ENCODE measurements at regions of chr1 and their contacts with region 1.

Region 1: GRCh38 chr1:29245876-29246275 is 9.6 kb downstream of the PTPRU start:
- DNase-seq: no peak
- H3K4me3 ChIP-seq: no peak overlapping the region
- H3K4me1 ChIP-seq: peaks cover 8% of the 10 kb centered on the region; the same call in 1 of the 2 replicates
- H3K27me3 ChIP-seq: no peaks in the 10 kb centered on the region

Region 2: GRCh38 chr1:29305943-29306342 is 60.1 kb after region 1 on chr1:
- in situ Hi-C with region 1: no loop called
- DNase-seq: no peak
- H3K4me3 ChIP-seq: no peak overlapping the region
- H3K4me1 ChIP-seq: 0 out of 2 replicates have a peak, but pooled peaks cover 5% of the 10 kb centered on the region
- H3K27me3 ChIP-seq: no peaks in the 10 kb centered on the region

Region 3: DNA sequence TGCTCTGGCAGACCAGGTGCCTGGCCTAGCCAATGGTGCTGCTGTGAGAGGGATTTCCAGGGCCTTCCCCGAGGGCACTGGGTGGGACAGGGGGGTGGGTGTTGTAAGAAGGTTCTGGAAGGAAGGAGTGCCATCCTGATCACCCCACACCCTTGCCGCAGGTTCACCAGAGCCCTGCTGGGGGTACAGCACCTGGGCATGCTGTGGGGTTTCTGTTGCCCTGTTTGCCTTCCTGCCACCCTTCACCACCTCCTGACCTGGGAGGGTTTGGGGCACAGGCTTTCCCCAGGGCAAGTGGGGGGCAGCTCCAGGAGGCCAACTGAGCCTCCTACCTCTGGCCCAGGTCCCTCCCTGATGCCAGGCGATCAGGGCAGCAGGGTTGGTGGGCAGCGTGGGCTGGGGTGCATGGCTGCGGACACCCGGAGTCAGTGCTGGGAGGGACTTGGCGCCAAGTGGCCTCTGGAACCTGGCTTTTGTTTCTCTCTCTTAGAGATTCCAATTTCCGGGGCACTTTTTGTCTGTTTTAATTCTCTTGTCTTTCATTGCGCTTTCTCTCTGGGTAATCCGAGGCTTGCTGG is 309.3 kb after region 1 on chr1:
- in situ Hi-C with region 1: no loop called
- DNase-seq: no peak
- H3K4me3 ChIP-seq: no peak overlapping the region
- H3K4me1 ChIP-seq: no peaks in the 10 kb centered on the region
- H3K27me3 ChIP-seq: 0 out of 2 replicates have a peak, but pooled peaks cover 2% of the 10 kb centered on the region

Region 4: GRCh38 chr1:30684881-30685795 is 1439.3 kb after region 1 on chr1:
- in situ Hi-C with region 1: loop called (anchors 10 kb)
- DNase-seq: peak in 1 of 2 experiments; percentile 78
- H3K4me3 ChIP-seq: no peak overlapping the region
- H3K4me1 ChIP-seq: no peaks in the 10 kb centered on the region
- H3K27me3 ChIP-seq: peaks cover 15% of the 10 kb centered on the region